ENCODE measurements at regions of chr12 and their contacts with region 1.

Region 1: DNA sequence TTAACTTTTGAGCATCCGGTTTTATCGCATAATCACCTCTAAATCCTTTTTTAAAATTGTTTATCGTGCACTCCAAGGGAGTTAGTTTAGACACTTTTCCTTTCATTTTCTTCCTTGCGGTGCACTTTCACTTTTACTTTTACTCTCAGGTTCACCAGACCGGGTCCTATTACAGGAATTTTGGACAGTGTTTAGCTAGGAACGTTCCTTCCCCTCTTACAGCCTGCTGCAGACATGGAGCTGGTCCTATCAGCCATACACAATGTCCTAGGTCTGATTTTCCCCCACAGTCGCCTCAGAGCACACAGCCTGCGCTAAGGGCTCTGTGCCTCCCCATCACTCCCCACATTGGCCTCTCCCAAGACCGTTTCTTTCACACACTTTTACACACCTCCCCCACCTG is 103.9 kb downstream of the ALG10 start:
- DNase-seq: peak in 2 of 9 donors; percentile 6 to 16
- ATAC-seq: no peak
- H3K4me3 ChIP-seq: peak overlapping the region; percentile 26
- H3K4me3 Mint-ChIP-seq: peak overlapping the region; percentile 59 to 85 (median 70)
- H3K27ac ChIP-seq: no peak overlapping the region
- H3K27ac Mint-ChIP-seq: peak overlapping the region in 7 of 9 donors; percentile 24 to 88 (median 75)
- H3K4me1 ChIP-seq: peaks cover 0 to 5% of the 10 kb centered on the region in 2 donors
- H3K4me1 Mint-ChIP-seq: peaks cover 8 to 16% (median 10%) of the 10 kb centered on the region in 7 donors
- H3K27me3 ChIP-seq: no peaks in the 10 kb centered on the region
- H3K27me3 Mint-ChIP-seq: peaks cover 16 to 45% (median 23%) of the 10 kb centered on the region in 5 donors

Region 2: DNA sequence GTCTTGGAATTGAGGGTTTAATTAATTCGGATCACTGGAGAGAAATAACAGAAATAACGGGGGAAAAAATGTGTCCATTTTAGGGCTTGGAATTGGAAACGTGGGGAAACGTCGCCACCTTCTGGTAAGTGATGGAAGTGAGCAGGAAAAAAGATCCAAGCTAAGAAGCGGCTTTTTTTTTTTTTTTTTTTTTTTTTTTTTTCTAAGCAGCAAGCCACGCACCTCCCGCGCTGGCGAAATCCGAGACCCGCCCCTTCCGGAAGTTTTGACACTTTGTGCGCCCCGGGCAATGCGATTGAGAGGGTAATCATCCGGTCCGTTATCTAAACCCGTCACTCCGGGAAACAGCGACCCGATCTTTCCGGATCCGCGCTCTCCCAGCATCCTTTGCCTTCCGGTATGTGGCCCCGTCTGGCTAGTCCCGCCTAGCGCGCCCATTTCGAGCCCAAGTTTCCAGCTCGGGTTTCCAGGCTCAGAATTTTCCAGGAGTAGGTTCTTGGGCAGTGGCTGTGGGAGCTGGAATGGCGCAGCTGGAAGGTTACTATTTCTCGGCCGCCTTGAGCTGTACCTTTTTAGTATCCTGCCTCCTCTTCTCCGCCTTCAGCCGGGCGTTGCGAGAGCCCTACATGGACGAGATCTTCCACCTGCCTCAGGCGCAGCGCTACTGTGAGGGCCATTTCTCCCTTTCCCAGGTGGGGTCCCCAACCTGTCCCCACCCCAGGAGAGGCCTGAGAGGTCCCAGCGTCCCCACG is 104.0 kb before region 1 on chr12 and contains the start of gene ALG10:
- CTCF ChIA-PET with region 1: no interaction called
- POLR2A ChIA-PET with region 1: no interaction called
- intact Hi-C with region 1: loop called in 1 of 2 experiments (anchors 1 kb)
- DNase-seq: peak; percentile 88 to 98 (median 96)
- ATAC-seq: peak; percentile 98
- H3K4me3 ChIP-seq: peak within 1 kb of the TSS; percentile 87
- H3K4me3 Mint-ChIP-seq: peak within 1 kb of the TSS; percentile 93 to 99 (median 96)
- H3K27ac ChIP-seq: peak within 1 kb of the TSS; percentile 94
- H3K27ac Mint-ChIP-seq: peak within 1 kb of the TSS; percentile 95 to 99 (median 98)
- H3K4me1 ChIP-seq: peaks cover 4 to 8% of the 10 kb centered on the region in 2 donors
- H3K4me1 Mint-ChIP-seq: peaks cover 6 to 42% (median 30%) of the 10 kb centered on the region in 7 donors
- H3K27me3 ChIP-seq: no peaks in the 10 kb centered on the region
- H3K27me3 Mint-ChIP-seq: no peaks in the 10 kb centered on the region
- total RNA-seq, gene ALG10: 10.2 to 21.6 (median 17.5) TPM

Region 3: DNA sequence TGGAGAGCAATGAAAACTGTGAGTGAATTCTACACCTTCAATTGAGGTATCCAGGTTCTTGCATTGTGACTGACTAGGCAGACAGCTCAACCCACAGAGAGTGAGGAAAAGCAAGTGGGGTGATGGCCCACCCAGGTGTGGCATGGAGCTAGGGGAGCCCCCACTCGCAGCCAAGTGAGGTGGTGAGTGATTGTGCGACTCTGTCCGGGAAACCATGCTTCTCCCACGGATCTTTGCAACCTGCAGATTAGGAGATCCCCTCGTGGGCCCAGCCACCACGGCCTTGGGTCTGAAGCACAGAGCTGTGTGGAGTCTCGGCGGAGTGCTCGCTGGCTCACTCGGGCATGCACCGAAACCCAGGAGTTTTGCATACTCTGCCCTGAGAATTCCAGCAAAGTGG is 16.2 kb after region 1 on chr12:
- CTCF ChIA-PET with region 1: no interaction called
- POLR2A ChIA-PET with region 1: no interaction called
- intact Hi-C with region 1: no loop called
- DNase-seq: no peak
- ATAC-seq: no peak
- H3K4me3 ChIP-seq: no peak overlapping the region
- H3K4me3 Mint-ChIP-seq: no peak overlapping the region
- H3K27ac ChIP-seq: no peak overlapping the region
- H3K27ac Mint-ChIP-seq: no peak overlapping the region
- H3K4me1 ChIP-seq: no peaks in the 10 kb centered on the region
- H3K4me1 Mint-ChIP-seq: no peaks in the 10 kb centered on the region
- H3K27me3 ChIP-seq: no peaks in the 10 kb centered on the region
- H3K27me3 Mint-ChIP-seq: peaks cover 0 to 10% (median 5%) of the 10 kb centered on the region in 5 donors

Region 4: GRCh38 chr12:34218165-34219045 is 92.2 kb after region 1 on chr12:
- CTCF ChIA-PET with region 1: interaction called, 3 read pairs
- POLR2A ChIA-PET with region 1: no interaction called
- intact Hi-C with region 1: loop called in 1 of 2 experiments (anchors 1 kb)
- DNase-seq: peak; percentile 14 to 61 (median 50)
- ATAC-seq: peak; percentile 90
- H3K4me3 ChIP-seq: peak overlapping the region; percentile 47
- H3K4me3 Mint-ChIP-seq: peak overlapping the region; percentile 76 to 95 (median 89)
- H3K27ac ChIP-seq: no peak overlapping the region
- H3K27ac Mint-ChIP-seq: peak overlapping the region in 6 of 9 donors; percentile 26 to 79 (median 74)
- H3K4me1 ChIP-seq: no peaks in the 10 kb centered on the region
- H3K4me1 Mint-ChIP-seq: peaks cover 4 to 18% (median 11%) of the 10 kb centered on the region in 7 donors
- H3K27me3 ChIP-seq: peaks cover 0 to 4% of the 10 kb centered on the region in 2 donors
- H3K27me3 Mint-ChIP-seq: peaks cover 2 to 17% (median 11%) of the 10 kb centered on the region in 5 donors

Region 5: DNA sequence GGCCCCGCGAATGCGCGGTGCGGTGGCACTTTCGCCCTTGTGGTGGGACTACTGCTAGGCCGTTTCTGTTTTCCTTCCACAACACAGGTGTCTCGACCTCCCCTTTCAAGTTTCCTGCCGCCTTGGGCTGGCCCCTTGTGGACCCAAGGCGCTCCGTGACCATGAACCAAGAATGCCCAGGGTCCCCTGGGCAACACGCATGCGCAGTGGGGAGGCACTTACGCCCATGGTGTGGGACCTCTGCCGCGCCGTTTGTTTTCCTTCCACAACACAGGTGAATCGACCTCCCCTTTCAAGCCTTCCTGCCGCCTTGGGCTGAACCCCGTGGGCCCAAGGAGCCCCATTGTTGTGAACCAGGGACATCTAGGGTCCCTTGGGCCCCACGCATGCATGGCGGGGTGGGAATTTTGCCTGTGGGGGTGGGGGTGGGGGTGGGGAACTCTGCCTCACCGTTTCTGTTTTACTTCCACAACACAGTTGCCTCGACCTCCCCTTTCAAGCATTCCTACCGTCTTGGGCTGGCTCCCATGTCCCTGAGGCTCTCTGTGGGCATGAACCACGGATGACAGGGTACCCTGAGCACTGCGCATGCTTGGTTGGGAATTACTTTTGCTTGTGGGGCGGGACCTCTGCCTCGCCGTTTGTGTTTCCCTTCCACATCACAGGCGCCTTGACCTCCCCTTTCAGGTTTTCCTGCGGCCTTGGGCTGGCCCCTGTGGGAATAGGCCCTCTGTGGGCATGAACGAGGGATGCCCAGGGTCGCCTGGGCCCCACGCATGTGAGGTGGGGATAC is 251.2 kb after region 1 on chr12:
- CTCF ChIA-PET with region 1: no interaction called
- POLR2A ChIA-PET with region 1: no interaction called
- intact Hi-C with region 1: no loop called
- DNase-seq: no peak
- ATAC-seq: no peak
- H3K4me3 ChIP-seq: no peak overlapping the region
- H3K4me3 Mint-ChIP-seq: no peak overlapping the region
- H3K27ac ChIP-seq: no peak overlapping the region
- H3K27ac Mint-ChIP-seq: no peak overlapping the region
- H3K4me1 ChIP-seq: no peaks in the 10 kb centered on the region
- H3K4me1 Mint-ChIP-seq: no peaks in the 10 kb centered on the region
- H3K27me3 ChIP-seq: no peaks in the 10 kb centered on the region
- H3K27me3 Mint-ChIP-seq: peaks cover 0 to 28% (median 0%) of the 10 kb centered on the region in 5 donors

Region 6: GRCh38 chr12:34625116-34625515 is 498.9 kb after region 1 on chr12:
- CTCF ChIA-PET with region 1: no interaction called
- POLR2A ChIA-PET with region 1: no interaction called
- intact Hi-C with region 1: loop called in 1 of 2 experiments (anchors 2 kb)
- DNase-seq: no peak
- ATAC-seq: no peak
- H3K4me3 ChIP-seq: no peak overlapping the region
- H3K4me3 Mint-ChIP-seq: no peak overlapping the region
- H3K27ac ChIP-seq: no peak overlapping the region
- H3K27ac Mint-ChIP-seq: no peak overlapping the region
- H3K4me1 ChIP-seq: no peaks in the 10 kb centered on the region
- H3K4me1 Mint-ChIP-seq: no peaks in the 10 kb centered on the region
- H3K27me3 ChIP-seq: no peaks in the 10 kb centered on the region
- H3K27me3 Mint-ChIP-seq: no peaks in the 10 kb centered on the region